PC-9 (cell line): ENCODE measurements at regions of chr1 and their contacts with region 1.

Region 1: DNA sequence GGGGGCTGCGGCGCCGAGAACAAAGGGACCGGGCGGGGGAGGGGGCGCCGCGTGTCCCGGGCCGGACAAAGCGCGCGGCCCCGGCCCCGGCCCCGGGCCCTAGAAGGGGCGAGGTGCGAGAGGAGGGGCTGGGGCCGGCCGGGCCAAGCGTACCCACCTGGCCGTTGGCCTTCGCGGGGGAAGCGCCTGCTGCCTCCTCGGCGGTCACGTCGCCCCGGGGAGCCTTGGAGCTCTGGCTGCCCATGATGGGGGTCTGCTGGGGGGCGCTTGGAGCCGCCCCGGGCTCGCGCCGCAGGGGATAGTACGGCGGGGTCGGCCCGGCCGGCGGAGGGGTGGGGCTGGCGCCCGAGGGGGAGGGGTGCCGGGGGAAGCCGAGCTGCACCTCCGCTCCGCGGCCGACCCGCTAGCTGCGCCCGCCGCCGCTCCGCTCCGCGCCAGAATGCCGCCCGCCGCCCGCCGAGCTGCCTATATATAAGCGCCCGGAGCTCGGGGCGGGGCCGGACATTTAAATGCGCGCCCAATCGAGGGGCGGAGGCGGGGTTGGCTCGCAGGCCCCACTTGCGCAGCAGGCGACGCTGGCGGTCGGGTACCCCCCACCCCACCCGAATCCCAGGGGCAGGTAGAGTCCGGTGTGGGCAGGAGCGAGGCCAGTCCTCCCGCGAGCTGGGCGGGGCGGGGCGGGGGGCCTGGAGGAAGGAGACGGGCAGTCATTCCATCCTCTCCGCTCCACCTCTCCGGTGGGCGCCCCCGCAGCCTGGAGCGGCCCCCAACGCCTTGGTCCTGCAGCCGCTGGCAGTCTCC is at the start of gene MARCKSL1:
- DNase-seq: peak; percentile 53 to 80
- H3K4me3 ChIP-seq: peak within 1 kb of the TSS; percentile 79
- H3K27ac ChIP-seq: no peak within 1 kb of the TSS
- H3K4me1 ChIP-seq: peaks cover 50% of the 10 kb centered on the region
- H3K27me3 ChIP-seq: no peaks in the 10 kb centered on the region
- CTCF ChIP-seq: no peak
- total RNA-seq, gene MARCKSL1: 91.5 and 117 TPM in 2 replicates

Region 2: DNA sequence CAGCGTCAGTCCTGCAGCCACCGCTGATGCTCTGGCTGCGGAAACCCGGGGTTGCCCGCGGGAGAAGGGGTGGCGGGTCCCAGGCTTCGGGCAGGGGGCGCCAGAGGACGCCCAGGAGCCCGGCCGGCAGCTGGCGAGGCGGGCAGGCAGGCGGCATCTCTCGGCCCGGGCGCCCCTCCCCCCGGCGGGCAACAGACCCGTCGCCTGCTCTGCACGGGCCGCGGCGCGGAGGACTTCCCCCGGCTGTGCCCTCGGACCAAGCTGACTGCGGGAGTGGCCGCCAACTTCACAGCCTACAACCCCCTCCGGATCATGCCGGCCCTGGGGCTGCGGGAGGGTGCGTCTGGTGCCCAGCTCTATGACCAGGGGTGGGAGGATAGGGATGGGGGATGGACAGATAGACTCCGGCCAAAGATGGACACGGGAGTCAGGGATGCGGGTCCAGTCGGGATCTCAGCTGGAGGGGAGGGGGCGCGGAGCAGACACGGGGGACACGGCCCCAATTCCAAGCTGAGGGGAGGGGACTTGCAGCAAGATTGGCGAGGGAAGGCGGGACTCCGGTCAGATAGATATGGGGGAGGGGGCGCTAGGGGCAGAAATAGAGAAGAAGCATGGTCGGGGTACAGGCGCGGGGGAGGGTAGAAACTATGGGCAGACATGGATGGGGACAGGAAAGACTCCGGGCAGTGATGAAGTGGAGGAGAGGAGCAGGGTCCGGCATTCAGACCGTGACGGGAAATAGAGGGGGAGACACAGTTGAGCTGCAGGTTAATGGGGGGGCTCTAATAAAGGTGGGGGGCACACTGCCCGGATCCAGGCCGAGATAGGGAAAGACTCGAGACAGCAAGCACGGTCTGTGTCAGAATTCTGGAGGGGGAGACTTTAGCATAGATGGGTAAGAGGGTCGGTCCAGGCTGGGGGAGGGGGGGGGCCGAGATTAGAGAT is 573.0 kb before region 1 on chr1:
- CTCF ChIA-PET with region 1: no interaction called
- POLR2A ChIA-PET with region 1: no interaction called
- intact Hi-C with region 1: no loop called
- DNase-seq: peak; percentile 65 to 88
- H3K4me3 ChIP-seq: peak overlapping the region; percentile 62
- H3K27ac ChIP-seq: no peak overlapping the region
- H3K4me1 ChIP-seq: peaks cover 32% of the 10 kb centered on the region
- H3K27me3 ChIP-seq: peaks cover 5% of the 10 kb centered on the region; the same call in 1 of the 2 replicates
- CTCF ChIP-seq: peak; percentile 90

Region 3: GRCh38 chr1:32351399-32352238 is 15.6 kb after region 1 on chr1:
- CTCF ChIA-PET with region 1: no interaction called
- POLR2A ChIA-PET with region 1: interaction called, 3 read pairs
- intact Hi-C with region 1: loop called (anchors 2 kb)
- DNase-seq: peak; percentile 76 to 91
- H3K4me3 ChIP-seq: peak overlapping the region; percentile 74
- H3K27ac ChIP-seq: peak overlapping the region; percentile 67
- H3K4me1 ChIP-seq: peaks cover 14% of the 10 kb centered on the region; the same call in 1 of the 2 replicates
- H3K27me3 ChIP-seq: no peaks in the 10 kb centered on the region
- CTCF ChIP-seq: no peak

Region 4: GRCh38 chr1:32394141-32394889 is 58.3 kb after region 1 on chr1 and contains the start of gene BSDC1:
- CTCF ChIA-PET with region 1: no interaction called
- POLR2A ChIA-PET with region 1: interaction called, 3 read pairs
- intact Hi-C with region 1: loop called (anchors 1 kb)
- DNase-seq: peak; percentile 97 to 98
- H3K4me3 ChIP-seq: peak within 1 kb of the TSS; percentile 71
- H3K27ac ChIP-seq: peak within 1 kb of the TSS; percentile 59
- H3K4me1 ChIP-seq: peaks cover 22% of the 10 kb centered on the region
- H3K27me3 ChIP-seq: no peaks in the 10 kb centered on the region
- CTCF ChIP-seq: no peak
- total RNA-seq, gene BSDC1: 74.0 and 76.2 TPM in 2 replicates

Region 5: GRCh38 chr1:32404946-32405345 is 69.0 kb after region 1 on chr1:
- CTCF ChIA-PET with region 1: no interaction called
- POLR2A ChIA-PET with region 1: no interaction called
- intact Hi-C with region 1: no loop called
- DNase-seq: no peak
- H3K4me3 ChIP-seq: no peak overlapping the region
- H3K27ac ChIP-seq: no peak overlapping the region
- H3K4me1 ChIP-seq: peaks cover 23% of the 10 kb centered on the region
- H3K27me3 ChIP-seq: no peaks in the 10 kb centered on the region
- CTCF ChIP-seq: no peak